ENCODE measurements at regions of chr12 and their contacts with region 1.

Region 1: DNA sequence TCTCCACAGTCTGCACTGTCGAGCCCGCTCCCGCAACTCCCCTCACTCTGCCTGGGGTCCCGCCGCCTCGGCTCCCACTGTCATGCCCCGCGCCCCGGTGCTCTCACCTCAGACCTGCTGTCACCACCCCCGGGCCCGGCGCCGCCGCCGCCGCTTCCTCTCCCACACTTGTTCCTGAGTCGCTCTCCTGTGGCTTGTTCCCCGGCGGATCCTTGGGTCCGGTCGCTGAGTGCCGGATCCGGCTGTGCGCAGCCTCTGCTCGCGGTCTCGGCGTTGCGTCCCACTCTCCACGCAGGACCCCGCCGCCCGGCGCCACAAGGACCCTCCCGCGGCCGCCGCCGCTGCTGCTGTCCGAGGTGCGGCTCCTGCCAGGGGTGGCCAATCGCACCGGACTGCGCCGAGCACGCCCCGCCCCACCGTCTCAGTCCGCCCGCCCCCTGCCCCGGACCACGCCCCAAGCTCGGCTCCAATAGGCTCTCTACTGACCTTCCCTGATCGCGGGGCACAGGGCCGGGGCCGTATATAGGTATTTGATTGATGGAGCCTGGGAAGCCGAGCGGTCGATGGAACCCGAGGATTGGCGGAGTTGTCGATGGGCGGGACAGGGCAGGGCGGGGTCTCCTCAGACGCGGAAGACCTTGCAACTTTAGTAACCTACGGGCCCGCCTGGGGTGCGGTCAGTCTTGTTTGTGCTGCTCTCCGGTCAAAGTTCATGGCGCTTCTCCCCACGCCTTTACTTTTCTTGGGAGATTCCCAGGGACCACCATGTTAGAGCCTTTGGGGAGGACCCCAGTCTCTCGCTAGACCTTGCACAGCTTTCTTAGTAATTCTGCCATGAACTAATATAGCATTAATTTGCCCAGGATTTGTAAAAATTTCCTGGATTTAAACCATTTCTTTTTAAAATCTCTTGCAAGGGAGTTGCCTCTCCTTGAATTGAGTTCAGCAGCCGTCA is at the start of gene TAOK3:
- DNase-seq: peak; percentile 98
- H3K4me3 Mint-ChIP-seq: peak within 1 kb of the TSS; percentile 98
- H3K27ac Mint-ChIP-seq: peak within 1 kb of the TSS; percentile 99
- H3K4me1 Mint-ChIP-seq: peaks cover 14% of the 10 kb centered on the region
- H3K27me3 Mint-ChIP-seq: no peaks in the 10 kb centered on the region
- CTCF ChIP-seq: no peak
- total RNA-seq, gene TAOK3: 24.8 and 28.6 TPM in 2 replicates

Region 2: DNA sequence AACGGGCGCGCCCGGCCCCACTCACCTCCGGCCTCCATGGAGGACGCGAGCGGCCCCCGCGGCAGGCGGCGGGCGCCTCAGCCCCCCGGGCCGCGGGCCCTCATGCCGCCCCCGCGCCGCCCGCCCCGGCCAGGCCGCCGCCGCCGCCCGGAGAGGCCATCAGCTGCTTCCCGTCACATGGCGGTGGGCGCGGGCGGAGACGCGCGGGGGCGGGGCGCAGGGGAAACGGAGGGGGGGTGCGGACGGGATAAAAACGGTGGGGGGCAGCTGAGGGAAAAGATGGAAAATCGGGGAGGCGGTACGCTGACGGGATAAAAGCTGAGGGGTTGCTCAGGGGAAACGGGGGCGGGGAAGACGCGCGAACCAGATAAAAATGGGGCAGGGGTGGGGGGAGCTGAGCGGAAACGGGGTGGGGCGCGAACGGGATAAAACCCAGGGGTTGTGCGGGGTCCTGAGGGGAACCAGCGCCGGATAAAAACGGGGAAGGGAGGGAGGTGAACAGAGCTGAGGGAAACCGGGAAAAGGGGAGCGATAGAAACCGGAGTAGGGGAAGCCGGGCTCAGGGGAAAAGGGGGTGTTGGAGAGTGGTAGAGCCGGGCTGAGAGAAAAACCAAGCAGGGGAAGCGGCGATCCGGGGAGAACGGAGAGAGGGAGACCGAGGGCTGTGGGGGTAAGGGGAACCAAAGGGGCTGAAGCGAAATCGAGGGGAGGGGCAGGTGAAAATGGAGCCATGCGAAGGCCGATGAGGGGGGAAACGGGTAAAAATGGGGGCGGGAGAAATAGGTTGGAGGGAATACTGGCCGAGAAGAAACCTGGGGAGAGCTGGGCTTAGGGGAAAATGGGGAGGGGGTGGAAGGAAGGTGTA is 311.6 kb before region 1 on chr12 and contains the start of gene WSB2:
- CTCF ChIA-PET with region 1: interaction called, 7 read pairs
- POLR2A ChIA-PET with region 1: interaction called, 5 read pairs
- intact Hi-C with region 1: loop called (anchors 5 kb)
- DNase-seq: no peak
- H3K4me3 Mint-ChIP-seq: peak within 1 kb of the TSS; percentile 89
- H3K27ac Mint-ChIP-seq: peak within 1 kb of the TSS; percentile 93
- H3K4me1 Mint-ChIP-seq: peaks cover 21% of the 10 kb centered on the region
- H3K27me3 Mint-ChIP-seq: no peaks in the 10 kb centered on the region
- CTCF ChIP-seq: no peak
- total RNA-seq, gene WSB2: 55.9 and 99.8 TPM in 2 replicates

Region 3: DNA sequence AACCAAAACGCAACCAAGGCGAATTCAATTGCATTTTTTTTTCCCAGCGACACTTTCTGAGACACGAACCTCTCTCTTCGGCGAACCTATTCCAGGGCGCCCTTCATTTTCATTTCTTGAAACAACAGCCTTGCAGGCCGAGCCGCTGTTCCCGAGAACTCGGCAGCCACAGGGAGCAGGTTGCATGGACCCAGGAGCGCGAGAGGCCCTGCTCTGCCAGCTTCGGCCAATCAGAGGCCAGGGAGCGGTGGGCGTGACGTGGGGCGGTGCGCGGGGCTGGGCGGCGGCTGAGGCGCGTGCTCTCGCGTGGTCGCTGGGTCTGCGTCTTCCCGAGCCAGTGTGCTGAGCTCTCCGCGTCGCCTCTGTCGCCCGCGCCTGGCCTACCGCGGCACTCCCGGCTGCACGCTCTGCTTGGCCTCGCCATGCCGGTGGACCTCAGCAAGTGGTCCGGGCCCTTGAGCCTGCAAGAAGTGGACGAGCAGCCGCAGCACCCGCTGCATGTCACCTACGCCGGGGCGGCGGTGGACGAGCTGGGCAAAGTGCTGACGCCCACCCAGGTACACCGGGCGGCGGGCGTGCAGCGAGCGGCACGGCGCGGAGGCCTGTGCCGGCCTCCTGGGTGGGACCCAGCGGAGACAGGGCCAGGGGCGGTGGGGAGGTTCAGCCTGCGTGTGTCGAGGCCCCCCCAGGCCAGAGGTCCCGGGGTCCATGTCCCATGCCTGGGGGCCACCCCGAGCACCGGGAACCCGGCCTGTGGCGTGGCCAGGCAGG is 236.8 kb before region 1 on chr12 and contains the start of gene PEBP1:
- CTCF ChIA-PET with region 1: interaction called, 20 read pairs
- POLR2A ChIA-PET with region 1: interaction called, 16 read pairs
- intact Hi-C with region 1: no loop called
- DNase-seq: peak; percentile 94
- H3K4me3 Mint-ChIP-seq: peak within 1 kb of the TSS; percentile 84
- H3K27ac Mint-ChIP-seq: peak within 1 kb of the TSS; percentile 47
- H3K4me1 Mint-ChIP-seq: peaks cover 10% of the 10 kb centered on the region
- H3K27me3 Mint-ChIP-seq: no peaks in the 10 kb centered on the region
- CTCF ChIP-seq: no peak
- total RNA-seq, gene PEBP1: 91.4 and 117 TPM in 2 replicates

Region 4: GRCh38 chr12:118183705-118184104 is 189.1 kb before region 1 on chr12:
- CTCF ChIA-PET with region 1: interaction called, 422 read pairs
- POLR2A ChIA-PET with region 1: interaction called, 89 read pairs
- intact Hi-C with region 1: loop called (anchors 1 kb)
- DNase-seq: peak; percentile 9
- H3K4me3 Mint-ChIP-seq: no peak overlapping the region
- H3K27ac Mint-ChIP-seq: no peak overlapping the region
- H3K4me1 Mint-ChIP-seq: peaks cover 21% of the 10 kb centered on the region
- H3K27me3 Mint-ChIP-seq: no peaks in the 10 kb centered on the region
- CTCF ChIP-seq: no peak

Region 5: DNA sequence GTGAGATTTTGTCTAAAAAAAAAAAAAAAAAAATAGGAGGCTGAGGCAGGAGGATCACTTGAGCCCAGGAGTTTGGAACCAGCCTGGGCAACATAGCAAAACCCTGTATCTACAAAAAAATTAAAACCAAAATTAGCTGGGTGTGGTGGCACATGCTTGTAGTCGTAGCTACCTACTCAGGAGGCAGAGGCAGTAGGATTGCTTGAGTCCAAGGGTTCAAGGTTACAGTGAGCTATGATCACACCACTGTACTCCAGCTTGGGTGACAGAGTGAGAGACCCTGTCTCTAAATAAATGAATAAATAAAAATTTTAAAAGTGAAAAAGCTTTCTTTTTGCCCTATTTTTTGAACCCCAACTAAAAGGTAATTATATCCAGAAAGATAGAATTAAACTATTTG is 123.3 kb before region 1 on chr12:
- CTCF ChIA-PET with region 1: interaction called, 10 read pairs
- POLR2A ChIA-PET with region 1: interaction called, 5 read pairs
- intact Hi-C with region 1: no loop called
- DNase-seq: no peak
- H3K4me3 Mint-ChIP-seq: no peak overlapping the region
- H3K27ac Mint-ChIP-seq: no peak overlapping the region
- H3K4me1 Mint-ChIP-seq: no peaks in the 10 kb centered on the region
- H3K27me3 Mint-ChIP-seq: no peaks in the 10 kb centered on the region
- CTCF ChIP-seq: no peak

Region 6: GRCh38 chr12:118357257-118358007 is 15.4 kb before region 1 on chr12:
- CTCF ChIA-PET with region 1: interaction called, 32 read pairs
- POLR2A ChIA-PET with region 1: interaction called, 35 read pairs
- intact Hi-C with region 1: no loop called
- DNase-seq: peak; percentile 67
- H3K4me3 Mint-ChIP-seq: peak overlapping the region; percentile 36
- H3K27ac Mint-ChIP-seq: peak overlapping the region; percentile 69
- H3K4me1 Mint-ChIP-seq: peaks cover 13% of the 10 kb centered on the region
- H3K27me3 Mint-ChIP-seq: no peaks in the 10 kb centered on the region
- CTCF ChIP-seq: peak; percentile 7

Region 7: GRCh38 chr12:119667577-119668323 is 1294.9 kb after region 1 on chr12 and contains the start of gene PRKAB1:
- CTCF ChIA-PET with region 1: interaction called, 17 read pairs
- POLR2A ChIA-PET with region 1: interaction called, 3 read pairs
- intact Hi-C with region 1: no loop called
- DNase-seq: peak; percentile 98
- H3K4me3 Mint-ChIP-seq: peak within 1 kb of the TSS; percentile 85
- H3K27ac Mint-ChIP-seq: peak within 1 kb of the TSS; percentile 86
- H3K4me1 Mint-ChIP-seq: peaks cover 19% of the 10 kb centered on the region
- H3K27me3 Mint-ChIP-seq: no peaks in the 10 kb centered on the region
- CTCF ChIP-seq: peak; percentile 86
- total RNA-seq, gene PRKAB1: 22.5 and 27.2 TPM in 2 replicates